ENCODE measurements at regions of chr16 and their contacts with region 1.

Region 1: DNA sequence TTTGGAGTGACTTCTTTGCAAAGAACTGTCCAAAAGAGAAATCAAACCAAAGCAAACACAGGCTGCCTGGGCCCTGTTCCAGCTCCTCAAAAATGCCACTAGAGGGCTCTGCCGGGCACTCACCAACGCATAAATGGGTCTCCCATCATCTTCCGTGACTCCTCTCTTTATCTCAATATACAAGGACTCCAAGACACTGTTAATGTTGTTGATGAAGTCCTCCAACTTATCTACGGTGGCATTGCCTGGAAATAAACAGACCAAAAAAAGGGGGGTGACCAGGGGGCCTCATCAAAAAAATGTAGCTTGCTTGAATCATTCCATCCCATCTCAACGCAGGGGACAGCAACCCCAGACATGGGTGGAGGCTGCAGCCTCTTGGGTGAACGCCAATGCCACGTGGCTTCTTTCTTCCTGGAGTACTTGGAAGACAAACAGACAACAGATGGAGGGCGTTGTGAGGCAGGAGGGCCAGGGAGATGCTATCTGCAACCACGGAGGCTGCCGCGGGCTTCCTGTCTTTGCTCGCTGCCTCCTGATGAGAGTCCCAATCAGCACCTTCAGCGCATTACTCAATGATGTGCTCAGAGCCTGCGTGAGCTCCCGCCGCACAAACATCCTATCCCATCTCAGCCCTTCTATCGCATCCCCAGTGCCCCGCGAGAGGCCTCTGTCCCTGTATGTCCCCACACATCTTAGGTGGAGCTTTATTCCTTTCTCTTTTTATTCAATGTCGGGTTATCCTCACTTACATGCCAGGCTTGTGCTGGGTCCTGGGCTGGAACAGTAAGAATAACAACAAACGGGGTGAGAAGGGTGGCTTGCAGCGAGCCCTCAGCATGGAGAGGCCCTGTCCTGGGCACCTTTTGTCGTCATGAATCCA is 32.0 kb downstream of the KDM8 start:
- DNase-seq: peak; percentile 40 to 68
- ATAC-seq: peak; percentile 82 to 91; a peak in 5 of 6 replicates
- H3K4me3 ChIP-seq: no peak overlapping the region
- H3K27ac ChIP-seq: peak overlapping the region; percentile 3 to 61; a peak in 3 of 6 replicates
- H3K4me1 ChIP-seq: peaks cover 11% of the 10 kb centered on the region
- CTCF ChIP-seq: peak; percentile 87
- EP300 ChIP-seq: no peak
- POLR2A ChIP-seq: no peak
- RAD21 ChIP-seq: peak; percentile 85 to 88

Region 2: GRCh38 chr16:27005386-27005785 is 229.9 kb before region 1 on chr16:
- CTCF ChIA-PET with region 1: no interaction called
- POLR2A ChIA-PET with region 1: no interaction called
- DNase-seq: no peak
- ATAC-seq: no peak
- H3K4me3 ChIP-seq: no peak overlapping the region
- H3K27ac ChIP-seq: no peak overlapping the region
- H3K4me1 ChIP-seq: no peaks in the 10 kb centered on the region
- CTCF ChIP-seq: no peak
- EP300 ChIP-seq: no peak
- POLR2A ChIP-seq: no peak
- RAD21 ChIP-seq: no peak

Region 3: DNA sequence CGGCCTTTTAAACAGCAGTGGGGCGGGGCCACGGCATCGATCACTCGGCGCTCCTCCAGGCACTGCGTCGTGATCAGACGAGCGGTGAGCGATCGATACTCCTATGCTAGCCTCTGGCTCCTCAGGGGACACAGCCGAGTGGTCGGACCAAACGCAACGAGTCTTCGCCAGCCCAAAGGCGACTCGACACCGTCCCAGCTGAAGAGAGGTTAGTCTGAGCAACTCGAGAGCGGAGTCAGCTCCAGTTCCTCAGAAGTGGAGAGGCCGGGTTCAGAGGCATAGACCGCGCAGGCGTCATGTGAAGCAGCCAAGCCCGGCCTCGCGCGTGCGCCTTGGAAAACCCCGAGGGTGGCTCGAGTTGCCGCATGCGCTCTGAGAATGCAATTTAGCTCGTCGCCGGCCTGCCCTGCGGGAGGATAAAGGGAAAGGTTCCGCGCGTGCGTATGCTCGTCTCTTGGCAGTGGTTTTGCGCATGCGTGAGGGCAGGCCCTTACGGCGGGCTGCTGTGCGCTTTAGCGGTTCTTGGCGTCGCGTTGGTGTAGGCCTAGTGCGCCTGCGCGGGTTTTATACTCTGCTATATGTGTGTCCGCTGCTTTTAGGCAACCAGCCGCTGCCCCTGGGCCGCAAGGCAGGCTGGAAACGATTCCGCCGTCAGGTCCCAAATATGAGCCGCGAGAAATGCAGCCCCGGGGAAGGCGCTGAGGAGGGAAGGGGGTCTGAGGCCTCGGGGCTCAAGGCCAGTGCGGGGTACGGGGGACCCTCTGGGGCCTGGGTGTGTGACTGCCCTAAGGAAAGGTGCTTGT is 31.7 kb before region 1 on chr16 and contains the start of gene KDM8:
- CTCF ChIA-PET with region 1: interaction called, 20 read pairs
- POLR2A ChIA-PET with region 1: interaction called, 12 read pairs
- DNase-seq: peak; percentile 98 to 100
- ATAC-seq: peak; percentile 89 to 97
- H3K4me3 ChIP-seq: peak within 1 kb of the TSS; percentile 59
- H3K27ac ChIP-seq: peak within 1 kb of the TSS; percentile 92 to 95
- H3K4me1 ChIP-seq: peaks cover 10% of the 10 kb centered on the region; the same call in 2 of the 3 replicates
- CTCF ChIP-seq: no peak
- EP300 ChIP-seq: no peak
- POLR2A ChIP-seq: peak; percentile 77
- RAD21 ChIP-seq: no peak
- polyA plus RNA-seq, gene KDM8: 1.6 and 2.0 TPM in 2 replicates

Region 4: GRCh38 chr16:27268376-27269299 is 33.3 kb after region 1 on chr16 and contains the start of gene NSMCE1:
- CTCF ChIA-PET with region 1: interaction called, 24 read pairs
- POLR2A ChIA-PET with region 1: no interaction called
- DNase-seq: peak; percentile 96 to 97
- ATAC-seq: peak; percentile 100
- H3K4me3 ChIP-seq: peak within 1 kb of the TSS; percentile 70
- H3K27ac ChIP-seq: peak within 1 kb of the TSS; percentile 84 to 97
- H3K4me1 ChIP-seq: peaks cover 35% of the 10 kb centered on the region
- CTCF ChIP-seq: no peak
- EP300 ChIP-seq: no peak
- POLR2A ChIP-seq: peak; percentile 81
- RAD21 ChIP-seq: no peak
- polyA plus RNA-seq, gene NSMCE1: 32.0 and 33.3 TPM in 2 replicates

Region 5: GRCh38 chr16:27304881-27305745 is 69.8 kb after region 1 on chr16:
- CTCF ChIA-PET with region 1: interaction called, 16 read pairs
- POLR2A ChIA-PET with region 1: no interaction called
- DNase-seq: no peak
- ATAC-seq: no peak
- H3K4me3 ChIP-seq: no peak overlapping the region
- H3K27ac ChIP-seq: no peak overlapping the region
- H3K4me1 ChIP-seq: no peaks in the 10 kb centered on the region
- CTCF ChIP-seq: no peak
- EP300 ChIP-seq: no peak
- POLR2A ChIP-seq: no peak
- RAD21 ChIP-seq: no peak

Region 6: GRCh38 chr16:27340654-27341053 is 105.4 kb after region 1 on chr16:
- CTCF ChIA-PET with region 1: interaction called, 10 read pairs
- POLR2A ChIA-PET with region 1: no interaction called
- DNase-seq: no peak
- ATAC-seq: no peak
- H3K4me3 ChIP-seq: no peak overlapping the region
- H3K27ac ChIP-seq: no peak overlapping the region
- H3K4me1 ChIP-seq: no peaks in the 10 kb centered on the region
- CTCF ChIP-seq: no peak
- EP300 ChIP-seq: no peak
- POLR2A ChIP-seq: no peak
- RAD21 ChIP-seq: no peak

Region 7: GRCh38 chr16:27374804-27375425 is 139.6 kb after region 1 on chr16:
- CTCF ChIA-PET with region 1: interaction called, 291 read pairs
- POLR2A ChIA-PET with region 1: no interaction called
- DNase-seq: peak; percentile 81 to 87
- ATAC-seq: peak; percentile 90 to 98
- H3K4me3 ChIP-seq: no peak overlapping the region
- H3K27ac ChIP-seq: no peak overlapping the region; a peak in 1 of 6 replicates
- H3K4me1 ChIP-seq: no peaks in the 10 kb centered on the region
- CTCF ChIP-seq: peak; percentile 16; the same call in 1 of the 3 replicates
- EP300 ChIP-seq: no peak
- POLR2A ChIP-seq: no peak
- RAD21 ChIP-seq: peak; percentile 16 to 37; a peak in 2 of 5 replicates

Measured in A549 (cell line).